Ascending aorta (tissue), 2 donors: ENCODE measurements at regions of chr12 and their contacts with region 1.

Region 1: DNA sequence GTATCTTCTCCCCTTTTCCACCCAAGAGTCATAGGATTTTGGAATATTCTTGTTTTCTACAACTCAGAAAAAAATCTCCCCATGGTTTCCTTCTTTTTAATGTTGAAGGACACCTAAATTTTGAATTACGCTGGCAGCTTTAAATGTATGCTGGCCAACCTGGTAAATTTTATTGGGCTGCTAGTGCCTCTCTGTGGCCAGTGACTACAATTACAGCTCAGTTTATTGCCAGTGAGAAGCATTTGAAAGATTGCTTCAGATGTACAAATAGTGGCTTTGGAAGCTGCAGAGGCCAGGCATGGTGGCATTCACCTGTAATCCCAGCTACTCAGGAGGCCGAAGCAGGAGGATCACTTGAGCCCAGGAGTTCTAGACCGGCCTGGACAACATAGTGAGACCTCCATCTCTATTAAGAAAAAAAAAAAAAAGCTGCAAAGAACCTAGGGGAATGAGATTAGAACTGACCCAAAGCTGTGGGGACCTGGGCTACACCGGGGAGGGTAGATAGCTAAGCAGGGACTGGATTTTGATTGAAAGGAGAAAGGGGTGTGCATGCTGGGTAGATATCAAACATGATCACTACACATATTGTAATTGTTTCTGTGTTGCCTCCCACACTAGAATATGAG is 7.6 kb upstream of the RAB21 start:
- DNase-seq: no peak
- H3K4me3 ChIP-seq: no peak overlapping the region
- H3K27ac ChIP-seq: no peak overlapping the region
- H3K4me1 ChIP-seq: no peaks in the 10 kb centered on the region
- H3K27me3 ChIP-seq: no peaks in the 10 kb centered on the region
- CTCF ChIP-seq: peak; percentile 61 to 75 (median 66)

Region 2: DNA sequence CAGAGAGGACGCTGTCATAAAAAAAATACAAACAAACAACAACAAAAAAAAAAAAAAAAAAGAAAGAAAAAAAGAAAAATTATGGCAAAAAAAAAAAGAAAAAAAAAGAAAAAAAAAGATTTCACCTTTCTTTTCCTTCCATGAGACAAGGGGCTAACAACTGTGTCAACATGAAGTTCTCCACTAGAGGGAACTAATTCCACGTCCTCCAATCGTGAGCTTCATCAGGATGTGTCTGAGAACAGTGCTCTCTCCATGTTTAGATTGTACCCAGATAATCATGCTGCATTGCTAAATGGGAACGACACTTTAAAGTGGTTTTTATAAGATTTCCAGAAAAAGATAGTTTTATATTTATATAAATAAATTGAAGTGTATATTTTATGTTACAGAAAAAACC is 1013.7 kb before region 1 on chr12:
- intact Hi-C with region 1: loop called (anchors 5 kb)
- DNase-seq: no peak
- H3K4me3 ChIP-seq: no peak overlapping the region
- H3K27ac ChIP-seq: no peak overlapping the region
- H3K4me1 ChIP-seq: no peaks in the 10 kb centered on the region
- H3K27me3 ChIP-seq: no peaks in the 10 kb centered on the region
- CTCF ChIP-seq: peak; percentile 43 to 67 (median 58)

Region 3: GRCh38 chr12:71216725-71217579 is 530.1 kb before region 1 on chr12:
- intact Hi-C with region 1: loop called (anchors 10 kb)
- DNase-seq: peak in 1 of 2 donors; percentile 68
- H3K4me3 ChIP-seq: no peak overlapping the region
- H3K27ac ChIP-seq: no peak overlapping the region
- H3K4me1 ChIP-seq: peaks cover 0 to 2% of the 10 kb centered on the region in 2 donors
- H3K27me3 ChIP-seq: no peaks in the 10 kb centered on the region
- CTCF ChIP-seq: peak; percentile 32 to 55 (median 45)

Region 4: DNA sequence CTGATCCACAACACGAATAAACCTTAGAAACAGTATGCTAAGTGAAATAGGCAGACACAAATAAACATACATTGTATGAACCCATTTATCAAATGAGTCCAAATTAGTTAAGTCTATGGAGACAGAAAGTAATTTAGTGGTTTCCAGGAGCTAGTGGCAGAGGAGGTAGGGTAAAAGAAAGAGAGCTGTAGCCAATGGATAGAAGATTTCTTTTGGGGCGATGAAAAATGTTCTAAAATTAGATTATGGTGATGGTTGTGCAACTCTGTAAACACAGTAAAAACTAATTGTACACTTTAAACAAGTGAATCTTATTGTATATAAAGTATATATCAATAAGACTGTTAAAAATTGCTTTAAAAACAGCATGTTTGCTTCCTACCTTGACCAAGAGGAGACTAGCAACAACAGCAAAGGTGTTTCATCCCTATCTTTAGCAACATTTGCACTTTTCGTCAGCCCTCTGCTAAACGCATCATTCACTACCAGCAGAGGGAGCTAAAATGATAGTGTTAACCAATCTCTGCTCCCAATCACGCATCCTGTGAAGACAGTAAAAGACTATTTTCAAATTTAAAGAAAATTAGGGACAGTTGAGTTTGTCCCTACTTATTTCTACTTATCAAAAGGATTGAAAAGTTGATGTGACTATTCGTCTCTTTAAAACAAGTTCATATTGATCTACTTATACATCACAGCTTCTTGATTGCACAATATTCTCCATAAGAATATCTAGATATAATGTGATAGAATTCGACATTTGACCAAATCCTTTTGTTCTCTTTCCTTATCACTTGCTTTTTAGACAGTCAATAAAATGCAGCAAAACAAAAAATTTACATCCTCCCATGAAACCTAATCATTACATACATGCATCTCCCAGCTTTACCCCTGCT is 331.5 kb before region 1 on chr12:
- intact Hi-C with region 1: loop called (anchors 2 kb)
- DNase-seq: no peak
- H3K4me3 ChIP-seq: no peak overlapping the region
- H3K27ac ChIP-seq: no peak overlapping the region
- H3K4me1 ChIP-seq: no peaks in the 10 kb centered on the region
- H3K27me3 ChIP-seq: no peaks in the 10 kb centered on the region
- CTCF ChIP-seq: peak; percentile 46 to 87 (median 62)

Region 5: DNA sequence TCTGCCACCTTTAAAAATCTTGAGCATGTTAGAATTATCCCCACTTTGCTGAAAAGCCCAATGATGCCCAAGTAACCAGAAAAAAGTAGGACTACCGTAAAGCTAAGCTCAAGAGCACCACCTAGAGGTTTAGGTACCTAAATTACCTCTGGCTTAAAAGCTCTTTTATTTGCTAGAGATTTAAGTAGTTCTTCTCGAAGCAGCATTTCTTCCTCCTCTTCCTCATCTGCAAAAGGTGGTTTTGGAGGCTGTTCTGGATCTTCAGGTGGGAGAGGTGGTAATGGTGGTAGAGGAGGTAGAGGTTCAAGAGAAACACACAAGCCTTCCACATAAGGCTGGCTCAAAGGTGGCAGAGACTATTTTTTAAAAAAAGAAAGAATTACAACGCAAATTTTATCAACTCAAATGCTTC is 110.4 kb before region 1 on chr12:
- intact Hi-C with region 1: loop called (anchors 10 kb)
- DNase-seq: no peak
- H3K4me3 ChIP-seq: no peak overlapping the region
- H3K27ac ChIP-seq: no peak overlapping the region
- H3K4me1 ChIP-seq: no peaks in the 10 kb centered on the region
- H3K27me3 ChIP-seq: no peaks in the 10 kb centered on the region
- CTCF ChIP-seq: peak; percentile 42 to 70 (median 70)

Region 6: GRCh38 chr12:71671816-71672215 is 75.3 kb before region 1 on chr12:
- intact Hi-C with region 1: no loop called
- DNase-seq: no peak
- H3K4me3 ChIP-seq: no peak overlapping the region
- H3K27ac ChIP-seq: no peak overlapping the region
- H3K4me1 ChIP-seq: no peaks in the 10 kb centered on the region
- H3K27me3 ChIP-seq: no peaks in the 10 kb centered on the region
- CTCF ChIP-seq: no peak

Region 7: DNA sequence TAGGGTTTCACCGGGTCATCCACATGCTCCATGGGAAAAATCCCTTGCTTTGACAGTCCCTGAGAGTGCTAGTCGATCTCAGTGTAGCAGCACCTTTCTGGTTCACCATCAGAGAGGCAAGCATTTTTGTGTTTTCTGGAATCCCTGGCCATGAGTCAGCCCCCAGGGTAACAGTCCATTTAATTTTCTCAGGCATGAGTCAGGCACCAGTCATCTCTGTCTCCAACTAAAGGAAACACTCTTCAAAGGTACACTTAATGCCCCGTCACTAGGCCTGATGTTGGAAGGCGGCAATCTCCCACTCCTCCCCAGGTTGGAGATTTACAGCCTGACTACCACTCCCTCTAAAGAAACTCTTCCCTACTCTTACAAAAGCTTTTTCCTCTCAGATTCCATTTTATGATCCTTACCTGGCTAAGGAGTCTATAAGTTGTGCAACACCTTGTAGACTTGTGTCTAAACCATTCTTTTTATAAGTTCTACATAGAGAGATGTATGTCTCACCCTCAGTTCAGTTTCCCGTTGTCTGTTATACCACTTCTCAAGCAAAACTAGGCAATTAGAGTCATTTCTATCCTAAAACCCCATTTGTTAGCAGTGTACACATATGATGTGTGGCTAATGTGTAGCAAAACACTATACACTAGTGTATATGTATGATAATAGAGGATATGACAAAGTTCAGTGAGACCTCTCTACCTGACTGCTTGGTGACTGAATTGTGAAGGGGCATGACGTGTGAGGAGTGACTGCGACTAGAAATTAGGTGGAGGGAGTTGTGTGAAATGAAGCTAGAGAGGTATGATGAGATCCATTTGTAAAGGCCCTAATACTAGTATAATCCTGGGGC is 36.6 kb before region 1 on chr12:
- intact Hi-C with region 1: no loop called
- DNase-seq: no peak
- H3K4me3 ChIP-seq: no peak overlapping the region
- H3K27ac ChIP-seq: no peak overlapping the region
- H3K4me1 ChIP-seq: no peaks in the 10 kb centered on the region
- H3K27me3 ChIP-seq: no peaks in the 10 kb centered on the region
- CTCF ChIP-seq: no peak

Region 8: DNA sequence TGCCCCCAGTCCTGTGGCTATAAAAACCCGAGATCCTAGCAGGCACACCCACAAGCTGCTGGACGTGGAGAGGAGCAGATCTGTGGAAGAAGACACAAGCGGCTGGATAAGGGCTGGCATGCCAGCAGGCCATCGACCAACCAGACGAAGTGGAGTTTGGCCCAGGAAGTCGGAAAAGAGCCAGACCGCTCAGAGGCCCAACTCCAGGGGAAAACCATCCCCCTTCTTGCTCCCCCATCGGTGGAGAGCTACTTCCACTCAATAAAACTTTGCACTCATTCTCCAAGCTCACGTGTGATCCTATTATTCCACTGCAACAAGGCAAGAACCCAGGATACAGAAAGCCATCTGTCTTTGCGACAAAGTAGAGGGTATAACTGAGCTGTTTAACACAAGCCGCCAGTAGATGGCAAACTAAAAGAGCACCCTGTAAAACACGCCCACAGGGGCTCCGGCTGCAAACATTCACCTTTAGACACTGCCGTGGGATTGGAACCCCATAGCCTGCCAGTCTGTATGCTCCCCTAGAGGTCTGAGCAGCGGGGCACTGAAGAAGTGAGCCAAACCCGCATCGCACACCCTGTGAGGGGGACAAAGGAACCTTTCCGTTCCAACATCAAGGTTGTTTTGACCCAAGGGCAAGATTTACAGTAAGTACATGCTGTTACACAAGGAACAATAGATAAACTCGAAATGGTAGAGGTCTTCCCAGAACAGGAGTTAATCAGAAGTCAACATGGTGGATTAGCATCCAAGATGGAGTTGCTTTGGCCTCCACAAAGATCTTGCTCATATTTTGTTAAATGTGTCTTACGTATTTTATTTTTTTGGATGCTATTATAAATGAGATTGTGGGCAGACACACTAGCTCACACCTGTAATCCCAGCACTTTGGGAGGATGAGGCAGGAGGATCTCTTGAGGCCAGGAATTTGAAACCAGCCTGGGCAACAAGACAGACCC is 15.1 kb before region 1 on chr12:
- intact Hi-C with region 1: no loop called
- DNase-seq: no peak
- H3K4me3 ChIP-seq: no peak overlapping the region
- H3K27ac ChIP-seq: no peak overlapping the region
- H3K4me1 ChIP-seq: no peaks in the 10 kb centered on the region
- H3K27me3 ChIP-seq: no peaks in the 10 kb centered on the region
- CTCF ChIP-seq: no peak

Region 9: DNA sequence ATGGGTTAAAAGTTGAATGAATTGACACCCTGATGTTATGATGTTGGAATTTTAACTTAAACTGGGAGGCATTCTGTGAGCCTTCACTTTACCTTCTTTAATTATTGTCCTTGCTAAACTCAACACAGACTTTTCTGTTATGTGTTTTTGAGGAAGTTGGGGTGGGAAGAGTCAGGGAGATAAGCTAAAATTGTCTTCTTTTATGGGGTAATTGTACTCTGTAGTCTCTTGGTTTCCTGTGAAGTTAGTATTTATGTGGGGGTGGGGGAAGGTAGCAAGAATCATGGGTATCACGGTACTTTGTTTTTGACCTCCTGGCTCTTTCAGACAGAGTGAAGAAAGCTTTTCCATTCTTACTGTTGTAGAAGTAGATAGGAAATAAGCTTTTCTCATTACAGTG is 40.5 kb after region 1 on chr12:
- intact Hi-C with region 1: no loop called
- DNase-seq: no peak
- H3K4me3 ChIP-seq: no peak overlapping the region
- H3K27ac ChIP-seq: no peak overlapping the region
- H3K4me1 ChIP-seq: no peaks in the 10 kb centered on the region
- H3K27me3 ChIP-seq: no peaks in the 10 kb centered on the region
- CTCF ChIP-seq: no peak